Mucosa of descending colon (tissue), 3 donors: ENCODE measurements at regions of chr1 and their contacts with region 1.

Region 1: DNA sequence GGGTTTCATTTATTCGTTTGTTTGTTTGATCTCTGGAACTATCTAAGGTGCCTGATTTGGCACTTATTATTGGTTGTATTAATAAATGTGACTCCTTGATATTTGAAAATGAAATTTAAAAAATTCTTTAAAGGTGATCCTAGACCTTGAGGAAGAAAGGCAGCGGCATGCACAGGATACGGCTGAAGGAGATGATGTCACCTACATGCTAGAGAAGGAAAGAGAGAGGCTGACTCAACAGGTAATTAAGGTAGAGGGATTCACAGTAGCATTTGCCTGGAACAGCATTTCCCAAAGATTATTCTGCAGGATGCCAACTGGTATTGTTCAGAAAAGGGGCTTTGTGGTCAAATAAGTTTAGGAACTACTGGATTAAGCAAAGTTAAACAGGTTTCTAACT is 54.4 kb upstream of the WNT2B start:
- DNase-seq: no peak
- ATAC-seq: no peak
- H3K4me3 ChIP-seq: no peak overlapping the region
- H3K4me1 ChIP-seq: no peaks in the 10 kb centered on the region
- CTCF ChIP-seq: no peak

Region 2: DNA sequence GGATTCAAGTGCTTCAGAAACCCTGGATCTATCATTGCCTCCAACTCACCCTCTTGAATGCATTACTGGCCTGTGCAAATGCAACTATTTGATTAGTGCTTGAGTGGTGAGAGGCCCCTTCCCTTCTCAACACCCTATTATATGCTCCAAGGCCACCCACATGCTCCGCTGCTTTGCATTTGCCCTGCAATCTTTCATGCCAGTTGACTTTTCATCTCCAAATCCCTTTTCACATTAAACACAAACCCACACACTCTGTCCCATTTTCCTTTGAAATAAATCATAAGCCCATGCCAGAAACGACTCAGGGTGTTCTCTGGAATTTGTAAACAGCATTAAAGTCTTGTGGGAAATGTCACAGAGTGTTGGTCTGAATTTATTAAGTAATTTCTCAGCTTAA is 137.2 kb before region 1 on chr1:
- intact Hi-C with region 1: no loop called
- DNase-seq: no peak
- ATAC-seq: peak; percentile 18
- H3K4me3 ChIP-seq: no peak overlapping the region
- H3K4me1 ChIP-seq: no peaks in the 10 kb centered on the region
- CTCF ChIP-seq: no peak

Region 3: GRCh38 chr1:112390775-112391602 is 63.3 kb before region 1 on chr1:
- intact Hi-C with region 1: no loop called
- DNase-seq: peak; percentile 85 to 96 (median 89)
- ATAC-seq: peak; percentile 81
- H3K4me3 ChIP-seq: peak overlapping the region; percentile 3
- H3K4me1 ChIP-seq: peaks cover 22% of the 10 kb centered on the region
- CTCF ChIP-seq: peak; percentile 87

Region 4: DNA sequence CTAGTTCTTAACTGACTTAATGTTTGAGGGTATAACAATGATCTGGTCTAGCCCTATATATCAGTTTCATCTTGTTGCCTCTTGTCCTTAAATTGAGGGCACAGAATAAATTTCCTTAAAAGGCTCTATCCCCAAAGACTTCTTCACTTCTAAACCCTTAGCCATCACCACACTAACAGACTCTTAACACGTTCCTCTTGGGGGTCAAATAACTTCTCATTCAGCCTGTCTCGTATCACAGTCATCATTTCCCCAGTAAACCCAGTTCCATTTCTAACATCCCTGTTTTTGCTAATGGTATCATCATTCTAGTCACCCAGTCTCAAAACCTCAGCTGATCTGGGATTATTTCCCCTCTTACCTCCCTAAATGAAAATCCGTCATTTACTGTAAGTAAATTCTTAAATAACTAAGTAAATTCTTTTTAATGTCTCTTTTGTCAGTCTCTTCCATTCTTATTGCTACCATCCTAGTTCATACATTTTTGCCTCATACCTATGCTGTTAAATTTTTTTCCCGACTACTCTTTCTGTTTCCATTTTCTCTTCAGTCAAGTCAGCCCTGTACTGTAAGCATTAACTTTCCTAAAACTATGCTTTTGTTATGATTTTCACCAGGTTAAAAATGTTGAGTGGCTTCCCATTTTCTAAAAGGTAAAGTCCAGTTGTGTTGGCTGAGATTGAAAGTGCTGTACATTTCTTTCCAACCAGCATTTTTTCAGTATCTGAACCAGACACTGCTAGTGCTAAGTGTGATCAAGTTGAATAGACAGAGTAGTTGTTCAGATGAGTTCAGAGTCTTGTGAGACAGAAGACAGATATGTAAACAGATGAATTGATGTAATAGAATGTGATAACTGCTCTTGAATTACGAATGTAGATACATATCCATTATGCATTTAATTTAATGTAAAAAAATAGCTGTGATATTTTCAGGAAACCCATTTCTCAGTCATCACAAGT is 51.4 kb before region 1 on chr1:
- intact Hi-C with region 1: loop called in 1 of 2 experiments (anchors 5 kb)
- DNase-seq: no peak
- ATAC-seq: no peak
- H3K4me3 ChIP-seq: no peak overlapping the region
- H3K4me1 ChIP-seq: peaks cover 30% of the 10 kb centered on the region
- CTCF ChIP-seq: no peak